Activated CD8-positive, alpha-beta T cell treated with anti-CD3 and anti-CD28 coated beads, Interleukin-2, amount 10 ng/mL, durations not matched to agents 7 days and 5 days (primary cell): ENCODE measurements at regions of chr9 and their contacts with region 1.

Region 1: GRCh38 chr9:78097541-78097940 is 65.9 kb upstream of the GNAQ start:
- DNase-seq: no peak
- ATAC-seq: no peak
- H3K4me3 Mint-ChIP-seq: no peak overlapping the region
- H3K27ac Mint-ChIP-seq: no peak overlapping the region
- H3K4me1 Mint-ChIP-seq: peaks cover 17% of the 10 kb centered on the region
- H3K27me3 Mint-ChIP-seq: no peaks in the 10 kb centered on the region

Region 2: GRCh38 chr9:78115073-78115472 is 17.5 kb after region 1 on chr9:
- CTCF ChIA-PET with region 1: interaction called, 23 read pairs
- POLR2A ChIA-PET with region 1: no interaction called
- DNase-seq: peak; percentile 34
- ATAC-seq: no peak
- H3K4me3 Mint-ChIP-seq: no peak overlapping the region
- H3K27ac Mint-ChIP-seq: no peak overlapping the region
- H3K4me1 Mint-ChIP-seq: peaks cover 22% of the 10 kb centered on the region
- H3K27me3 Mint-ChIP-seq: no peaks in the 10 kb centered on the region

Region 3: DNA sequence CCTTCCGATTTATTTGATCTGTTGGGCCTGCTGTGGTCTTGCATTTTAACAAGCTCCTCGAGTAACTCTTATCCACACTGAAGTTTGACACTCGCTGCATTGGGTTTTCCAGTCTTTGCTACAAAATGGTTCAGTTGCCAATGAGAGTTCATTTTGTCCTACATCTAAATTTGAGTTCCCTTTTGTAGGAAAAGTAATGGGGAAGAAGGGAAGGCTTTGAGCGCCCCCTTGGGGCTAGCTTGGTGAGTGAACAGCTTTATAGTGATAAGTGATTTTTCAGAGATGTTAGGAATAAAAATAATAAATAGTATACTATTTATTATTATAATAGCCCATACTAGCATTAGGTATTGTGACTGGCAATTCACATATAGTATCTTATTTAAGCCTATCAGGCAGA is 23.9 kb after region 1 on chr9:
- CTCF ChIA-PET with region 1: interaction called, 23 read pairs
- POLR2A ChIA-PET with region 1: no interaction called
- DNase-seq: peak; percentile 68
- ATAC-seq: no peak
- H3K4me3 Mint-ChIP-seq: no peak overlapping the region
- H3K27ac Mint-ChIP-seq: no peak overlapping the region
- H3K4me1 Mint-ChIP-seq: peaks cover 23% of the 10 kb centered on the region
- H3K27me3 Mint-ChIP-seq: peaks cover 8% of the 10 kb centered on the region

Region 4: DNA sequence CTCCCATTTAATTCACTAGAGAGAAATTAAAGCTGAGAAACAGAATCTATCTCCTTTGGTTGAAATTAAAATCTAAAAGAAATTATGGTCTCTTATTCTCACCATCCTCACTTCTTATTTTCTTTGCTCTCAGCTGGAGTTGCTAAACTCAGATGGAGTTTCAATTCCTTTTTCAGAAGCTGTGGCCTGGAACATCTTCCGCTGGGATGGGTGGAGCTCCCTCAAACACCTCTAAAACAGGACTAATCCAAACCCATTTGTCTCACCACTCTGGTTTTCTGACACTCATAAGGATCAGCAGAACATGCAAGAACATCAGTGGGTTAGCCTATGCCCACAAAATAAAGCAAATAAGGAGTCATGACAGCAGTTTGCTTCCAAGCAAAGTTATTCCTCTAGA is 98.7 kb after region 1 on chr9:
- CTCF ChIA-PET with region 1: no interaction called
- POLR2A ChIA-PET with region 1: no interaction called
- DNase-seq: no peak
- ATAC-seq: no peak
- H3K4me3 Mint-ChIP-seq: no peak overlapping the region
- H3K27ac Mint-ChIP-seq: no peak overlapping the region
- H3K4me1 Mint-ChIP-seq: peaks cover 14% of the 10 kb centered on the region
- H3K27me3 Mint-ChIP-seq: no peaks in the 10 kb centered on the region